HEK293 (cell line): ENCODE measurements at regions of chr7 and their contacts with region 1.

Region 1: DNA sequence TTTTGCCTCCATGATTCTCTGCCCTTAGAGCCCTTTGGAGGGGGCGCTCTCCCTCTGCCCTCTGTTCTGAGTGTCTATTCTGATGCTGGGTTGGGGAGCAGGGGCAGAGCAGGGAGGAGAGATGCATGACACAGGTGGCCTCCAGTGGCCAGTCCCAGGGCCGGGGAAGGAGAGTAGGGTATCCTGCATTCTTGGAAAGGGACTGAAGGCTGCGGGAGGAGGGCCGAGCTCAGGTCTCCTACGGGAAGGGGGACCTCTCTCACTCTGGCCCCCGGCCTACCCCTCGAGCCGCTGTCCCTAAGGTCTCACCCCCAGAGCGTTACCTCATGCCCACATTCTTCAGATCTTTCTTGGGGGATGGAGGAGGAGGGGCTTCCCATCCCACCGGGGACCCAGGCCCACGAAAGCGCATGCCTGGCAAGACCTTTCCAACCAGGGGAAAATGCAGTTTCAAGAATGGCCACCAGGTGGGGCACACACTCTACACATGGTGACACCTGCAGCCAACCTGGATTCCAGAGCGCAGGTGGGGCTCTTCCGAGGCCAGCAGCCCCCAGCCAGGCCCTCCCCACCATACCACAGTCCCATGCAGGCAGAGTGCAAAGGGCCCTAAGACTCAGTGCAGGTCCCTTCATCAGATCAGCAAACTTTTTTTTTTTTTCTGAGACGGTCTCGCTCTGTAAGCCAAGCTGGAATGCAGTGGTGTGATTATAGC is 86.4 kb downstream of the MYL10 start:
- H3K4me3 ChIP-seq: no peak overlapping the region
- H3K27ac ChIP-seq: no peak overlapping the region
- H3K4me1 ChIP-seq: no peaks in the 10 kb centered on the region
- CTCF ChIP-seq: peak; percentile 93

Region 2: DNA sequence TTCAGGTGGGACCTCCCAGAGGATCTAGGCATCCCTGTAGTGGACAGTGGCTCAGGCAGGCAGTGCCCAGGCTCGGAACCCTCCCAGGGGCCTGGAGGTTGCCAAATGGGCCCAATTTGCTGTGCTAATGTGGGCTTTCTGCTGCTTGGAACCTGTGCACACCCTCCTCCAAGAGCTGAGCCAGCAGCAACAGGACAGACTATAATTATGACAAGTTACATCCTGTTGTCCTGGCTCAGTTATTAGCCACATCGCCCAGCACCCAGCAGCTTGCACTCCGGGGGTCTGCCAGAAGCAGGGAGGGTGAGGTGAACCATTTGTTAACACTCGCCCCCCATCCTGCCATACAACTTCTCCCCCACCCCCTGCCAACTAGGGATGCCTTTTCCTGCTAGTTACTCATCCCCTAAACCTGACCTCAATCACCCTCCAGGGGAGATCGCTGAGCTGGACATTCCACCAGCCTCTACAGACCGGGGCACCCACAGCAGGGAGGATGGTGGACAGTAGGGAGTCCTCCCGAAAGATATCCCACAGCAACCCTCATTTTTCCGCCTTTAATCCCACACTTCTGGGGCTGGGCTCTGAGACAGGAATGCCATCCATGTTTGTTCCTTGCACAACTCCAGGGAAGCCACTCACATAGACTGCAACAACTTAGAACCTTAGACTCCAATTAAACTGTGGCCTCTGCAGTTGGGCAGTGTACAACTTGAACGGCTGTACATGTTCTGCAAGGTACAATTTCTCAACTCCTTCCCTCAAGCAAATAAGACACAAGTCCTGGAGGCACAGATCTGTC is 94.3 kb after region 1 on chr7:
- CTCF ChIA-PET with region 1: no interaction called
- POLR2A ChIA-PET with region 1: no interaction called
- H3K4me3 ChIP-seq: no peak overlapping the region
- H3K27ac ChIP-seq: no peak overlapping the region
- H3K4me1 ChIP-seq: no peaks in the 10 kb centered on the region
- CTCF ChIP-seq: no peak

Region 3: DNA sequence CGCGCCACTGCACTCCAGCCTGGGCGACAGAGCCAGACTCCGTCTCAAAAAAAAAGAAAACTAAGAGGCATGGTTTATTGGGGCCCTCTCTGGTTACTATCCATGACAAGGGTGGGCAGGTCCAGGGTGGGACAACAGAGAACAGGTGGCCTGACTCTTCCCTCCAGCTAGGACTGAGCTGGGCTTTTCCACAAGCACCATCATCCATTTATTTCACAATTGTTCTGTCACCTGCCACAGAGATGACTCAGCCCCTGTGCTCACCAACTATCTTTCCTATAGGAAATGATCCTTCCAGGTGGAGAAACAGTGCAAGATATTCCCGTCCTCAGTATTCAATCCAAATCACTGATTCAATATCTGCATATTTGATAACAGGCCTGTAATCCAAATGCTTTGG is 131.3 kb after region 1 on chr7:
- CTCF ChIA-PET with region 1: no interaction called
- POLR2A ChIA-PET with region 1: no interaction called
- H3K4me3 ChIP-seq: no peak overlapping the region
- H3K27ac ChIP-seq: no peak overlapping the region
- H3K4me1 ChIP-seq: no peaks in the 10 kb centered on the region
- CTCF ChIP-seq: no peak

Region 4: DNA sequence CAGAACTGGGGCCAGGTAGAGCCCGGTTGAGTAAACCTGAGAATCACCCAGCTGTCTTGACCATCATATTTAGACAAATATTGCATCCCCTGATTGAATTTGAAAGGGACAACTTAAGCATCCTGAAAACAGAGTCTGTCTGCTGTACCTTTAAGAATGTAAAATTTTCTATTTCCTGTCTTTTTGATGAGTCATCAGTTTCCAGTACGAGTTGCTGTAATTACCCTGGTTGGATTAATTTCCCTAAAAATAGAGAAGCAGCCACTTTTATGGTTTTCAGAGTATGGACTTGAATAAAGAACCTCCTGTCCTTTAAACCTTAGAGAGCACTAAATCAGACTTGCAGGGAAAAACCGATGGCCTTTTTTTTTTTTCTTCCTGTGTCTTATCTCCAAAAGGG is 579.3 kb after region 1 on chr7:
- CTCF ChIA-PET with region 1: no interaction called
- POLR2A ChIA-PET with region 1: no interaction called
- H3K4me3 ChIP-seq: no peak overlapping the region
- H3K27ac ChIP-seq: no peak overlapping the region
- H3K4me1 ChIP-seq: 0 out of 2 replicates have a peak, but pooled peaks cover 4% of the 10 kb centered on the region
- CTCF ChIP-seq: no peak

Region 5: GRCh38 chr7:102236592-102237287 is 694.1 kb after region 1 on chr7:
- CTCF ChIA-PET with region 1: interaction called, 14 read pairs
- POLR2A ChIA-PET with region 1: no interaction called
- H3K4me3 ChIP-seq: no peak overlapping the region
- H3K27ac ChIP-seq: no peak overlapping the region
- H3K4me1 ChIP-seq: no peaks in the 10 kb centered on the region
- CTCF ChIP-seq: peak; percentile 51

Region 6: DNA sequence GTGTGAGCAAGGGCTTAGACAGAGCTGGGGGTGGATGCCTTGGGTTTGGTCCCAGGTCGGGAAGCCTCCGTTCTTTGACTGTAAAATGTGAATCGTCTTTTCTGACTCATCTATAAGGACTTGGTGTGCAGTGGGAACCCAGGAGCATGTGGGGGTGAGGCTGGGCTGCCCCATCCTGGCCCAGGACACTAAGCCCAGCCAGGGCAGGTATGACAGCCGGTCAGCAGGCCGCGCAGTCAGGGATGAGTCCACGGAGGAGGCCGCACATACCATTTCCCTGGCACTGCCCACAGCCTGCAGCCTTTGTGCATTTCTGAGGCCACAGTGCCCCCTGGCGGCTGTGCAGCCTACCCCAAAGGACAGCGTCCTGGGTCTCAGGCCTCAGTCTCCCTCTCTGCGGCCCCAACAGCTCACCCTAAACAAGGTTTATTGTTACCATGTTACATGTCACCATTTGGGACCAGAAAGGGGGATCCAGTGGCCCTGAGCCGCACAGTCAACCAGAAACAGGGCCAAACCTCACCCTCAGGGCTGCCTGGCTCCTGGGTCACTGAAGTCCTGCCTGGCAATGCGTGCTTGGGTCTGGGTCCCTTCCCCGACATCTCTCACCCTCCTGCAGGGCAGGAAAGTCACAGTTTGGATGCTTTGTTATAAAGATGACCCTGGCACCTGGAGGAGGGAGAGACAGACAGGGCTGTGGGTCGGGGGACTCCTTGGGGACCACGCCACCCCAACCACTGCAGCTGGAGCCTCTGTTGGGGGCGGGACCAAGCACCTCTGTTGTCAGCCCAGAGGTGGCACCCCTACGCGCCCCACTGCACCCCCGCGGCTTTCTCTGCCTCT is 729.6 kb after region 1 on chr7:
- CTCF ChIA-PET with region 1: interaction called, 27 read pairs
- POLR2A ChIA-PET with region 1: interaction called, 3 read pairs
- H3K4me3 ChIP-seq: no peak overlapping the region
- H3K27ac ChIP-seq: no peak overlapping the region
- H3K4me1 ChIP-seq: no peaks in the 10 kb centered on the region
- CTCF ChIP-seq: peak; percentile 93